Kidney (tissue), 22 donors: ENCODE measurements at regions of chr9 and their contacts with region 1.

Region 1: GRCh38 chr9:87662808-87663528 is 63.0 kb upstream of the CTSL start:
- DNase-seq: peak; percentile 56 to 91 (median 77)
- H3K4me3 ChIP-seq: no peak overlapping the region
- H3K27ac ChIP-seq: no peak overlapping the region
- H3K4me1 ChIP-seq: peaks cover 0 to 1% (median 0%) of the 10 kb centered on the region in 3 donors
- H3K27me3 ChIP-seq: no peaks in the 10 kb centered on the region
- CTCF ChIP-seq: peak; percentile 74

Region 2: GRCh38 chr9:87336914-87337333 is 326.0 kb before region 1 on chr9:
- intact Hi-C with region 1: loop called (anchors 10 kb)
- DNase-seq: peak in 3 of 5 donors; percentile 59 to 95 (median 89)
- H3K4me3 ChIP-seq: peak overlapping the region; percentile 72 to 77 (median 76)
- H3K27ac ChIP-seq: peak overlapping the region in 1 of 2 donors; percentile 24
- H3K4me1 ChIP-seq: peaks cover 0 to 6% (median 3%) of the 10 kb centered on the region in 3 donors
- H3K27me3 ChIP-seq: no peaks in the 10 kb centered on the region
- CTCF ChIP-seq: peak; percentile 73

Region 3: GRCh38 chr9:87382902-87383301 is 280.1 kb before region 1 on chr9:
- intact Hi-C with region 1: no loop called
- DNase-seq: no peak
- H3K4me3 ChIP-seq: no peak overlapping the region
- H3K27ac ChIP-seq: no peak overlapping the region
- H3K4me1 ChIP-seq: peaks cover 0 to 4% (median 0%) of the 10 kb centered on the region in 3 donors
- H3K27me3 ChIP-seq: no peaks in the 10 kb centered on the region
- CTCF ChIP-seq: no peak